Mammary epithelial cell (primary cell): ENCODE measurements at regions of chr10 and their contacts with region 1.

Region 1: GRCh38 chr10:102835007-102835482 is 2.2 kb downstream of the CYP17A1 start:
- DNase-seq: peak; percentile 39
- H3K4me3 ChIP-seq: no peak overlapping the region
- H3K27ac ChIP-seq: no peak overlapping the region
- H3K4me1 ChIP-seq: no peaks in the 10 kb centered on the region
- H3K27me3 ChIP-seq: no peaks in the 10 kb centered on the region
- CTCF ChIP-seq: peak; percentile 70 to 89

Region 2: DNA sequence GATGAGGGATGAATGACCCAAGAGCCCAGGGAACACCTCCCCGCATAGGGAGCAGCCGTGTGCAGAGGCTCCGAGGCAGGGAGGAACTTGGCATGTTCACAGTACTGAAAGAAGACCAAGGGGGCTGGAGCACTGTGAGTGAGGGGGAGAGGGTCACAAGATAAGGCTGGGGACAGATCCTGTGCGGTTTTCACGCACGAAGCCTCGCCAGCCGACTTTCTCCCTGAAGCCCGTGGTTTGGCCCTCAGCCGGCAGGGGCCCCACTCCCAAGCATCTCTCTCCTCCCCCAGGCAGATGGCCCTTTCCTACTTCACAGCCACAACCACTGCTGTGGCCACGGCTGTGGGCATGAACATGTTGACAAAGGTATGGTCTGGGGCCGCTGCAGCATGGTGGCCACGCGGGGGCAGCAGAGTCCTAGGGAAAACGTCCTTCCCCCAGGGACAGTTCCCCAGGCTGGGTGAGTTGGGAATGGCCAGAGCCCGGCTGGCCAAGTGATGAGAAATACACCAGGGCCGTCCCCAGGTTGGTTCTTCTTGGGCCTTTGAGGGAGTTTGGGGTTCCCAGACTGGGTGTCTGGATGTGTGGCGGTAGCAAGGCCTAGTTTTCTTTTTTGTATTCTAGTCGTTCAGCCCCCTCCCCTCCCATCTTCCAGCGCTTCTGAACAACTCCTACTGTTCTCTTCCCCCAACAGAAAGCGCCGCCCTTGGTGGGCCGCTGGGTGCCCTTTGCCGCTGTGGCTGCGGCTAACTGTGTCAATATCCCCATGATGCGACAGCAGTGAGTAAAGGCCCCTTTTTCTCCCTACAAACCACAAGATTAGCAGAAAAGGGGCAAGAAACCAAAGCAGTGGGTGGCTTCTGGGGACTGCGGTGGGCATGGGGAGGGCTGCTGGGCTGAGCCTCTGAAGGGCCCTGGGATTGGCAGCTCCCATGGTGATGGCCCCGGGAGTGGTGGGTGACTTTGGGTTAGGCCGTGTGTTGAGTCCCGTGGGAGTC is 105.7 kb before region 1 on chr10:
- CTCF ChIA-PET with region 1: no interaction called
- dilution Hi-C with region 1: loop called (anchors 5 kb)
- in situ Hi-C with region 1: loop called in 1 of 2 experiments (anchors 10 kb)
- intact Hi-C with region 1: loop called (anchors 1 kb)
- DNase-seq: peak; percentile 57
- H3K4me3 ChIP-seq: no peak overlapping the region
- H3K27ac ChIP-seq: no peak overlapping the region
- H3K4me1 ChIP-seq: no peaks in the 10 kb centered on the region
- H3K27me3 ChIP-seq: no peaks in the 10 kb centered on the region
- CTCF ChIP-seq: peak; percentile 90

Region 3: GRCh38 chr10:102752934-102753664 is 81.9 kb before region 1 on chr10:
- CTCF ChIA-PET with region 1: no interaction called
- dilution Hi-C with region 1: no loop called
- in situ Hi-C with region 1: no loop called
- intact Hi-C with region 1: loop called (anchors 1 kb)
- DNase-seq: peak; percentile 37
- H3K4me3 ChIP-seq: no peak overlapping the region
- H3K27ac ChIP-seq: no peak overlapping the region
- H3K4me1 ChIP-seq: no peaks in the 10 kb centered on the region
- H3K27me3 ChIP-seq: no peaks in the 10 kb centered on the region
- CTCF ChIP-seq: peak; percentile 52 to 77

Region 4: DNA sequence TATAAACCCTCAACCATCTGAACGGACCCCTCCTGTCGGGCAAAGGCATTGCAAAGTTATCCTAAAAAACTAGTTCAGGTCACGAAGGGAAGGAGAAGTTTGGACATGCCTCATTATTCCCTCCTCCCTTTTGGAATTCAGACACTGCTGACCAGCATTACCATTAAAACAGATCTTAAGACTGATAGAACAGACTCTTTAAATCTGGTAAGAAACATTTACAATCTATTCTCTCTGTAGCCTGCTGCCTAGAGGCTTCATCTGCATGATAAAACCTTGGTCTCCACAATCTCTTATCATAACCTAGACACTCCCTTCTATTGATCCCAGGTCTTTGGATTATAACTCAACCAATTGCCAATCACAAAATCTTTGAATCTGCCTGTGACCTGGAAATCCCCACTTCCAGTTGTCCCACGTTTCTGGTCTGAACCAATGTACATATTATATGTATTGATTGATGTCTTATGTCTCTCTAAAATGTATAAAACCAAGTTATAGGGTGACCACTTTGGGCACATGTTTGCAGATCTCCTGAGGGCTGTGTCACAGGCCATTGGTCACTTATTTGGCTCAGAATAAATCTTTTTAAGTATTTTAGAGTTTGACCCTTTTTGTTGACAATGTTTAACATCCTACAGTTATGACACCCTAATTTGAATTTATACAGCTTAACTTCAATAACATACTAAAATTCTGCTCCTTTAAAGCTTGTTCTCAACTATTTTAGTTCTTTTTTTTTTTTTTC is 59.6 kb after region 1 on chr10:
- CTCF ChIA-PET with region 1: no interaction called
- dilution Hi-C with region 1: no loop called
- in situ Hi-C with region 1: loop called in 1 of 2 experiments (anchors 5 kb)
- intact Hi-C with region 1: no loop called
- DNase-seq: no peak
- H3K4me3 ChIP-seq: no peak overlapping the region
- H3K27ac ChIP-seq: no peak overlapping the region
- H3K4me1 ChIP-seq: no peaks in the 10 kb centered on the region
- H3K27me3 ChIP-seq: no peaks in the 10 kb centered on the region
- CTCF ChIP-seq: no peak

Region 5: DNA sequence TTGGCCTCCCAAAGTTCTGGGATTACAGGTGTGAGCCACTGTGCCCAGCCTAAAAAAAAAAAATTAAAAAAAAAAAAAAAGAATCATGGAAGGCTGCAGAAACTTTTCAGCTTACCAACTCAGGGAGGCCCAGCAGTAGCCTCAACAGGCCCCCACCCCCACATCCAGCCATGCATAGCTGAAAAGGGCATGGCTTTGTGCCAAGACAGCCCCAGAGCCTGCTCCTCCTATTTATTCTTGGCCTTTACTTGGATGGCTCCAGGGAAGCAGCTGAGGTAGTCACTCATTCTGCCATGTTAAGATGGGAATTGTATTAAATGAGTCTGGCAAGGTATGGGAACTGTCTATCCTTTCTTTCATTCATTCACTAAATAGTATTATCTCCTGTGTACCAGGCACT is 69.3 kb after region 1 on chr10:
- CTCF ChIA-PET with region 1: no interaction called
- dilution Hi-C with region 1: loop called (anchors 5 kb)
- in situ Hi-C with region 1: loop called (anchors 5 kb)
- intact Hi-C with region 1: loop called (anchors 1 kb)
- DNase-seq: no peak
- H3K4me3 ChIP-seq: no peak overlapping the region
- H3K27ac ChIP-seq: no peak overlapping the region
- H3K4me1 ChIP-seq: no peaks in the 10 kb centered on the region
- H3K27me3 ChIP-seq: no peaks in the 10 kb centered on the region
- CTCF ChIP-seq: no peak

Region 6: GRCh38 chr10:102935505-102935904 is 100.5 kb after region 1 on chr10:
- CTCF ChIA-PET with region 1: no interaction called
- dilution Hi-C with region 1: no loop called
- in situ Hi-C with region 1: no loop called
- intact Hi-C with region 1: no loop called
- DNase-seq: no peak
- H3K4me3 ChIP-seq: no peak overlapping the region
- H3K27ac ChIP-seq: no peak overlapping the region
- H3K4me1 ChIP-seq: no peaks in the 10 kb centered on the region
- H3K27me3 ChIP-seq: no peaks in the 10 kb centered on the region
- CTCF ChIP-seq: no peak

Region 7: GRCh38 chr10:103069453-103070331 is 234.6 kb after region 1 on chr10:
- CTCF ChIA-PET with region 1: no interaction called
- dilution Hi-C with region 1: no loop called
- in situ Hi-C with region 1: loop called in 1 of 2 experiments (anchors 10 kb)
- intact Hi-C with region 1: loop called (anchors 1 kb)
- DNase-seq: peak; percentile 48
- H3K4me3 ChIP-seq: no peak overlapping the region
- H3K27ac ChIP-seq: no peak overlapping the region
- H3K4me1 ChIP-seq: no peaks in the 10 kb centered on the region
- H3K27me3 ChIP-seq: no peaks in the 10 kb centered on the region
- CTCF ChIP-seq: peak; percentile 68 to 73